HEK293 (cell line): ENCODE measurements at regions of chr6 and their contacts with region 1.

Region 1: DNA sequence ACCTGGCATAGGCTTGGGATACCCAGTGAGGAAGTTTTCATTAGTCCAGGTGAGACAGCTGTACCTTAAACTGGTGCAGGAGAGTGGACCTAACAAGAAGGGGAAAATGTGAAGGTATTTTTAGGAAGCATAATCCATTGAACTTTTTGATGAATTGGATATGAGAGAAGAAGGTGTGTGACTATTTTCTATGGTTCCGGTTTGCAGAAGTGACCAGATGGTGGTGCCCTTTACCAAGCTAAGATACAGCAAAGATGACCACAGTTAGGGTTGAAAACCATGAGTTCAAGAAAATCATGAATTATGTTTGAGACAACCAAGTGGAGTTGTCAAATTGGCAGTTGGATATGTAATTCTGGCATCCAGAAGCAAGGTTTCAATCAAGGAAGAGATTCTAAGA is 61.9 kb upstream of the NRSN1 start:
- H3K4me3 ChIP-seq: no peak overlapping the region
- H3K27ac ChIP-seq: no peak overlapping the region
- H3K4me1 ChIP-seq: no peaks in the 10 kb centered on the region
- CTCF ChIP-seq: peak; percentile 43; the same call in 1 of the 2 replicates

Region 2: DNA sequence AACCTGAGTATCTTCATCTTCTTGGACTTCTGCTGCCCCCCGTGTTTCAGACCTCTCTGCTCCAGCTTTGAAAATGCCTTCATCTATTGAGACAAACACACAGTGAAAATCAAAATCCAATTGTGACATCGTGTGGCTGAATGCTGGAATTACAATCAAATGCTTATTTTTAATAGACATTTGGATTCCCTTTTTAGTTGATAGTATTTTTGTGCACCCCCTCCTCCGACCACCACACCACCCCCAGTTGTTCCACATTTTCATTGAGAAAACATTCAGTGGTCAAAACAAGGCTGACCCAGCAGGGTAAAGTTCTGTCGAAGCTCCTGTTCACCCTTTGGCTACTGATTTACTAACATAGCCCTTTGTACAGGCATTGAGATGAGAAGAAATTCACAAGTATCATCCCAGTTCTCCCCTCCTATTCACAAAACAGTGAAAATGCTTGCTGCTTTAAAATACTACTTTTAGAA is 141.0 kb after region 1 on chr6:
- CTCF ChIA-PET with region 1: interaction called, 10 read pairs
- POLR2A ChIA-PET with region 1: no interaction called
- H3K4me3 ChIP-seq: no peak overlapping the region
- H3K27ac ChIP-seq: no peak overlapping the region
- H3K4me1 ChIP-seq: no peaks in the 10 kb centered on the region
- CTCF ChIP-seq: peak; percentile 36; the same call in 1 of the 2 replicates

Region 3: DNA sequence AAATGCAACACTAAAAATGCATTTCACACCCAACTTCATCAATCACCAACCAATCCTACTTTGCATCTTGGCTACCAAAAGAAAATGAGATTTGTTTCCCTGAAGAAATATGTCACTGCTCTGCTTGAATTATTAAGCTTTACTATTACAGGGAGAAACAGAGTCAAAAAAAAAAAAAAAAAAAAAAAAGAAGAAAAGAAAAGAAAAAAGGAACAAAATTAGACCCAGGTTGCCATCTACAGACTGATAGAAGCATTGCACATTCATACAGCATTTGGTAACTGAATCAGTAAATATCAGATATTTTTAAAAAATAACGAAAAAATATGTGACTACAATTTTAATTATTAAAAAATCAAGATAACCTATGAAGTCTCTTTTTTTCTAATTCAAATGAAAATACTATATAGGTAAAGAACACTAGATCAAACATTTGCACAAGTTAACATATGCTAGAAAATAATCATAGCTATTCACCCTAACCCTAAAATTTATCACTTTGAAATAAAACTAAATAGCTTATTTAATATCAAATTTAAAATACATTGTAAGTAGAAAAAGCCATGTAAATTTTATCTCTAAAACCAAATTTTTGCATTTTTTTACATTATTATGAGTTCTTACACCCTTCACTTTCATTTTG is 210.5 kb after region 1 on chr6:
- CTCF ChIA-PET with region 1: interaction called, 11 read pairs
- POLR2A ChIA-PET with region 1: no interaction called
- H3K4me3 ChIP-seq: no peak overlapping the region
- H3K27ac ChIP-seq: no peak overlapping the region
- H3K4me1 ChIP-seq: no peaks in the 10 kb centered on the region
- CTCF ChIP-seq: no peak